Naive thymus-derived CD4-positive, alpha-beta T cell (primary cell): ENCODE measurements at regions of chr19 and their contacts with region 1.

Region 1: DNA sequence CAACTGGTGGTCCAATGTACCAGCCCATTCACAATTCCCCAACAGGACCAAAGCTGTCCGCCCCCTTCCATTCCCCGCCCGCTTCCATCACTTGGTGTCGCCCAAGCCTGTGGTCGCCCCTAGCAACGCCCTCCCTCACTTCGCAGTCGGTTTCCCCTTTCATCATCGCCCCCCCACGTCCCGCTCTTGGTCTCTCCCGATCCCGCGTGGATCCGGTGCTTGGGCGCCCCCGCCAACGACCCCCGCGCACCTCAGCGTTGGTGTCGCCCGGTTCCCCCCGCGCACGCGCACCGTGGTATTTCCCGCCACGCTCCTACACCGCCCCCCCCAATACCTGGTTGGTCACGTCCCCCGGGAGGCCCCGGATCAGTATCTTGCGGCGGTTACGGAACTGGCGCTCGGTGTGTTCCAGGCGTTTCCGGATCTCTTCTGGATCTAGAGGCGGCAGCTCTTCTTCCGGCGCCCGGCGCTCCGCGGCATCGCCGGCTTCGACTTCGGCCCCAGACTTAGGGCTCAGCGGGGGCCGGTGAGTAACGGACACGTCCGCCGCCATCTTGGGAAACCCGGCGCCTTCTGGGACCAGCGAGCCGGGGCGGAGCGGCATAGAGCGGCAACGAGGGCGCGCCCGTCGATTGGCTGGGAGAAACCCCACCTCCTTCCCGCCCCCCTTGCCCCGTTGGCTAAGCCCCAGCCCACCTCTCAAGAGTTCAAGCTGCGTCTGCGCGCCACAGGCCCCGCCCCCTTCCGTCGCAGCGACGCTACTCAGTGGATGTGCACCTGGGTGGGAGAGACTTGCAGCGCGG is at the start of gene RAVER1:
- DNase-seq: peak; percentile 86 to 98 (median 97)
- ATAC-seq: peak; percentile 98
- H3K4me3 ChIP-seq: peak within 1 kb of the TSS; percentile 89
- H3K4me3 Mint-ChIP-seq: peak within 1 kb of the TSS; percentile 89 to 98 (median 93)
- H3K27ac ChIP-seq: peak within 1 kb of the TSS; percentile 91
- H3K27ac Mint-ChIP-seq: peak within 1 kb of the TSS; percentile 85 to 97 (median 95)
- H3K4me1 ChIP-seq: peaks cover 17 to 31% of the 10 kb centered on the region in 2 donors
- H3K4me1 Mint-ChIP-seq: peaks cover 6 to 48% (median 33%) of the 10 kb centered on the region in 7 donors
- H3K27me3 ChIP-seq: no peaks in the 10 kb centered on the region
- H3K27me3 Mint-ChIP-seq: no peaks in the 10 kb centered on the region
- total RNA-seq, gene RAVER1: 43.2 to 81.1 (median 50.2) TPM

Region 2: GRCh38 chr19:9801976-9802375 is 531.2 kb before region 1 on chr19:
- CTCF ChIA-PET with region 1: no interaction called
- POLR2A ChIA-PET with region 1: no interaction called
- intact Hi-C with region 1: no loop called
- DNase-seq: no peak
- ATAC-seq: no peak
- H3K4me3 ChIP-seq: no peak overlapping the region
- H3K4me3 Mint-ChIP-seq: no peak overlapping the region
- H3K27ac ChIP-seq: no peak overlapping the region
- H3K27ac Mint-ChIP-seq: peak overlapping the region in 3 of 9 donors; percentile 31 to 76 (median 45)
- H3K4me1 ChIP-seq: peaks cover under 1 to 17% of the 10 kb centered on the region in 2 donors
- H3K4me1 Mint-ChIP-seq: peaks cover 8 to 32% (median 17%) of the 10 kb centered on the region in 7 donors
- H3K27me3 ChIP-seq: no peaks in the 10 kb centered on the region
- H3K27me3 Mint-ChIP-seq: no peaks in the 10 kb centered on the region

Region 3: GRCh38 chr19:9834726-9835506 is 498.2 kb before region 1 on chr19 and contains the start of gene PIN1:
- CTCF ChIA-PET with region 1: no interaction called
- POLR2A ChIA-PET with region 1: no interaction called
- intact Hi-C with region 1: loop called in 1 of 2 experiments (anchors 1 kb)
- DNase-seq: peak; percentile 98 to 100 (median 99)
- ATAC-seq: peak; percentile 98
- H3K4me3 ChIP-seq: peak within 1 kb of the TSS; percentile 92
- H3K4me3 Mint-ChIP-seq: peak within 1 kb of the TSS; percentile 83 to 97 (median 95)
- H3K27ac ChIP-seq: peak within 1 kb of the TSS; percentile 71
- H3K27ac Mint-ChIP-seq: peak within 1 kb of the TSS; percentile 82 to 99 (median 94)
- H3K4me1 ChIP-seq: peaks cover 10 to 11% of the 10 kb centered on the region in 2 donors
- H3K4me1 Mint-ChIP-seq: peaks cover 16 to 32% (median 20%) of the 10 kb centered on the region in 7 donors
- H3K27me3 ChIP-seq: no peaks in the 10 kb centered on the region
- H3K27me3 Mint-ChIP-seq: no peaks in the 10 kb centered on the region
- total RNA-seq, gene PIN1: 41.4 to 93.2 (median 61.1) TPM

Region 4: GRCh38 chr19:9958379-9958821 is 374.8 kb before region 1 on chr19:
- CTCF ChIA-PET with region 1: no interaction called
- POLR2A ChIA-PET with region 1: no interaction called
- intact Hi-C with region 1: no loop called
- DNase-seq: no peak
- ATAC-seq: no peak
- H3K4me3 ChIP-seq: no peak overlapping the region
- H3K4me3 Mint-ChIP-seq: no peak overlapping the region
- H3K27ac ChIP-seq: no peak overlapping the region
- H3K27ac Mint-ChIP-seq: no peak overlapping the region
- H3K4me1 ChIP-seq: no peaks in the 10 kb centered on the region
- H3K4me1 Mint-ChIP-seq: no peaks in the 10 kb centered on the region
- H3K27me3 ChIP-seq: no peaks in the 10 kb centered on the region
- H3K27me3 Mint-ChIP-seq: peaks cover 2 to 27% (median 13%) of the 10 kb centered on the region in 5 donors

Region 5: GRCh38 chr19:10194500-10195289 is 138.5 kb before region 1 on chr19 and contains the start of gene DNMT1:
- CTCF ChIA-PET with region 1: no interaction called
- POLR2A ChIA-PET with region 1: interaction called, 3 read pairs
- intact Hi-C with region 1: loop called in 1 of 2 experiments (anchors 1 kb)
- DNase-seq: peak; percentile 87 to 98 (median 93)
- ATAC-seq: peak; percentile 99
- H3K4me3 ChIP-seq: peak within 1 kb of the TSS; percentile 88
- H3K4me3 Mint-ChIP-seq: peak within 1 kb of the TSS; percentile 87 to 98 (median 95)
- H3K27ac ChIP-seq: peak within 1 kb of the TSS; percentile 81
- H3K27ac Mint-ChIP-seq: peak within 1 kb of the TSS; percentile 82 to 96 (median 92)
- H3K4me1 ChIP-seq: peaks cover 7 to 20% of the 10 kb centered on the region in 2 donors
- H3K4me1 Mint-ChIP-seq: peaks cover 14 to 48% (median 40%) of the 10 kb centered on the region in 7 donors
- H3K27me3 ChIP-seq: no peaks in the 10 kb centered on the region
- H3K27me3 Mint-ChIP-seq: no peaks in the 10 kb centered on the region
- total RNA-seq, gene DNMT1: 175 to 334 (median 194) TPM

Region 6: GRCh38 chr19:10286803-10287737 is 46.1 kb before region 1 on chr19 and contains the start of gene ICAM4:
- CTCF ChIA-PET with region 1: no interaction called
- POLR2A ChIA-PET with region 1: interaction called, 4 read pairs
- intact Hi-C with region 1: loop called (anchors 1 to 2 kb)
- DNase-seq: peak in 3 of 9 donors; percentile 25 to 59 (median 27)
- ATAC-seq: peak; percentile 30
- H3K4me3 ChIP-seq: peak within 1 kb of the TSS; percentile 8
- H3K4me3 Mint-ChIP-seq: peak within 1 kb of the TSS; percentile 66 to 87 (median 75)
- H3K27ac ChIP-seq: no peak within 1 kb of the TSS
- H3K27ac Mint-ChIP-seq: peak within 1 kb of the TSS in 1 of 9 donors; percentile 51
- H3K4me1 ChIP-seq: peaks cover 36 to 47% of the 10 kb centered on the region in 2 donors
- H3K4me1 Mint-ChIP-seq: peaks cover 32 to 64% (median 50%) of the 10 kb centered on the region in 7 donors
- H3K27me3 ChIP-seq: peaks cover 8 to 29% of the 10 kb centered on the region in 2 donors
- H3K27me3 Mint-ChIP-seq: peaks cover 23 to 40% (median 32%) of the 10 kb centered on the region in 5 donors
- total RNA-seq, gene ICAM4: 0.40 to 3.7 (median 1.2) TPM

Region 7: GRCh38 chr19:10315335-10316214 is 17.6 kb before region 1 on chr19 and contains the start of gene FDX2:
- CTCF ChIA-PET with region 1: interaction called, 3 read pairs
- POLR2A ChIA-PET with region 1: interaction called, 8 read pairs
- intact Hi-C with region 1: loop called (anchors 1 to 2 kb)
- DNase-seq: peak; percentile 77 to 94 (median 86)
- ATAC-seq: peak; percentile 92
- H3K4me3 ChIP-seq: peak within 1 kb of the TSS; percentile 86
- H3K4me3 Mint-ChIP-seq: peak within 1 kb of the TSS; percentile 87 to 94 (median 90)
- H3K27ac ChIP-seq: peak within 1 kb of the TSS; percentile 70
- H3K27ac Mint-ChIP-seq: peak within 1 kb of the TSS; percentile 35 to 95 (median 86)
- H3K4me1 ChIP-seq: peaks cover 6 to 13% of the 10 kb centered on the region in 2 donors
- H3K4me1 Mint-ChIP-seq: peaks cover 13 to 23% (median 16%) of the 10 kb centered on the region in 7 donors
- H3K27me3 ChIP-seq: no peaks in the 10 kb centered on the region
- H3K27me3 Mint-ChIP-seq: no peaks in the 10 kb centered on the region
- total RNA-seq, gene FDX2: 5.7 to 10.5 (median 9.3) TPM

Region 8: GRCh38 chr19:10380313-10381102 is 47.4 kb after region 1 on chr19 and contains the start of gene TYK2:
- CTCF ChIA-PET with region 1: no interaction called
- POLR2A ChIA-PET with region 1: interaction called, 10 read pairs
- intact Hi-C with region 1: loop called (anchors 1 kb)
- DNase-seq: peak; percentile 94 to 99 (median 97)
- ATAC-seq: peak; percentile 98
- H3K4me3 ChIP-seq: peak within 1 kb of the TSS; percentile 94
- H3K4me3 Mint-ChIP-seq: peak within 1 kb of the TSS; percentile 93 to 99 (median 94)
- H3K27ac ChIP-seq: peak within 1 kb of the TSS; percentile 84
- H3K27ac Mint-ChIP-seq: peak within 1 kb of the TSS; percentile 88 to 97 (median 93)
- H3K4me1 ChIP-seq: peaks cover 5 to 10% of the 10 kb centered on the region in 2 donors
- H3K4me1 Mint-ChIP-seq: peaks cover 14 to 34% (median 23%) of the 10 kb centered on the region in 7 donors
- H3K27me3 ChIP-seq: no peaks in the 10 kb centered on the region
- H3K27me3 Mint-ChIP-seq: peaks cover 0 to 3% (median 0%) of the 10 kb centered on the region in 5 donors
- total RNA-seq, gene TYK2: 224 to 346 (median 284) TPM

Region 9: DNA sequence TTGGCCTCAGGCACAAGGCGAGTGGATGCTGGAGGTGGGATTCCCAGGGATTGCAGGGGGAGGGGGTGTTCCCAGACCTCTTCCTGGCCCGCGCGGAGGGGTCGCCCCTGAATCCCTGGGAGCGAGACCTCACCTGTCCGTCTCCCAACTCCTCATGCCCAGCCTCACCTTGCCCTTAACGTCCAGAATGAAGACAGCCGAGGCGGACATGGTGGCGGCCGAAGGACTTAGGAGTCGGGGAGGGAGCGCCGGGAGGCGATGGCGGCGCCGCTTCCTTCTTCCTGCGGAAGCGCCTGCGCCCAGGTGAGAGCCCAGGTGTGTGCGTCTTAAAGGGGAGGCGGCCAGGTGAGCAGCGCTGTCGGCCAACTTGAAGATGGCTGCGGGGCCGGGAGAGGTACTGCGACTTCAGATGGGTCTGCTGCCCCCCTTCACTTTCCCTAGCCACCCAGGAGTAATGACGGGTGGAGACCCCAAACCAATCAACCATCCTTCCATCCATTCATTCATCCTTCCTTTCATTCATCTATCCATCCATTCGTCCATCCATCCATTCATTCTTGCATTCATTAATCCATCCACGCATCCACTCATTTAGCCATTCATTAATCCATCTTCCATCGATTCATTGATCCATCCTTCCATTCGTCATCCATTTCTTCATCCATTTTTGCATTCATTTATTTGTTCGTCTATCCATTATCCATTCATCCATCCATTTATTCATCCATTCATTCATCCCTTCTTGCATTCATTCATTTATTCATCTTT is 254.1 kb after region 1 on chr19 and contains the start of gene AP1M2:
- CTCF ChIA-PET with region 1: no interaction called
- POLR2A ChIA-PET with region 1: no interaction called
- intact Hi-C with region 1: no loop called
- DNase-seq: no peak
- ATAC-seq: no peak
- H3K4me3 ChIP-seq: no peak within 1 kb of the TSS
- H3K4me3 Mint-ChIP-seq: peak within 1 kb of the TSS in 2 of 10 donors; percentile 3 to 12
- H3K27ac ChIP-seq: no peak within 1 kb of the TSS
- H3K27ac Mint-ChIP-seq: peak within 1 kb of the TSS in 2 of 9 donors; percentile 5 to 23
- H3K4me1 ChIP-seq: peaks cover 0 to 5% of the 10 kb centered on the region in 2 donors
- H3K4me1 Mint-ChIP-seq: peaks cover 8 to 23% (median 11%) of the 10 kb centered on the region in 7 donors
- H3K27me3 ChIP-seq: no peaks in the 10 kb centered on the region
- H3K27me3 Mint-ChIP-seq: peaks cover 7 to 23% (median 9%) of the 10 kb centered on the region in 5 donors
- total RNA-seq, gene AP1M2: not detected